K562 (cell line): ENCODE measurements at regions of chr2 and their contacts with region 1.

Region 1: GRCh38 chr2:45643543-45644542 is 7.6 kb upstream of the PRKCE start:
- DNase-seq: peak; percentile 75 to 90 (median 88)
- ATAC-seq: peak; percentile 100
- H3K4me3 ChIP-seq: no peak overlapping the region
- H3K27ac ChIP-seq: no peak overlapping the region
- H3K4me1 ChIP-seq: peaks cover 2 to 8% of the 10 kb centered on the region in 2 experiments; a peak in 4 of 5 replicates
- H3K27me3 ChIP-seq: peaks cover 18 to 52% of the 10 kb centered on the region in 2 experiments
- CTCF ChIP-seq: peak; percentile 86 to 92 (median 89)
- EP300 ChIP-seq: no peak
- POLR2A ChIP-seq: no peak
- RAD21 ChIP-seq: peak; percentile 98

Region 2: DNA sequence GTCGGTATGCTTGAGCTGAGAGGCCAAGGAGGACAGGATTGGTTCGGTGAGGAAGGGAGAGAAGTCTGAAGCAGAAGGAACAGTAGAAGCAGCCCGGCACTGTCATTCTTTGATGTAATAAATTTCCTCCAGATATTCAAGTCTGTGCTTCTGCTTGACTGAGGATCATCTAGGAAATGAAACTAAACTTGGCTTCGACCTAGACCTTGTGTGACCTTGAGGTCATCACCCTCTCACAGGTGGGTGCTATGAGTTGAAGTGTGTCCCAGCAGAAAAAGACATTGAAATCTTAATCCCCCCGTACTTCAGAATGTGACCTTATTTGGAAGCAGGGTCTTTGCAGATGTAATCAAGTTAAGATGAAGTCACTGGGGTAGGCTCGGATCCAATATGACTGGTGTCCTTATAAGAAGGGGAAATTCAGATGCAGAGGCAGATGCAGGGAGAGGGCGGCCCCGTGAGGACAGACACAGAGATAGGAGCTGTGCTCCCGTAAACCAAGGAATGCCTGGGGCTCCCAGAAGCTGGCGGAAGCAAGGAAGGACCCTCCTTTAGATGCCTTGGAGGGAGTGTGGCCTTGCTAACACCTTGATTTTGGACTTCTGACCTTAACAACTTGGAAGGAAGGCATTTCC is 56.7 kb after region 1 on chr2:
- CTCF ChIA-PET with region 1: interaction called, 3 read pairs
- POLR2A ChIA-PET with region 1: no interaction called
- in situ Hi-C with region 1: no loop called
- intact Hi-C with region 1: loop called (anchors 1 kb)
- DNase-seq: peak in 1 of 4 experiments; percentile 19
- ATAC-seq: peak; percentile 51; the same call in 1 of the 3 replicates
- H3K4me3 ChIP-seq: no peak overlapping the region
- H3K27ac ChIP-seq: no peak overlapping the region
- H3K4me1 ChIP-seq: no peaks in the 10 kb centered on the region
- H3K27me3 ChIP-seq: peaks cover 0 to 43% of the 10 kb centered on the region in 2 experiments; a peak in 3 of 5 replicates
- CTCF ChIP-seq: peak in 2 of 3 experiments; percentile 25 to 37; a peak in 2 of 6 replicates
- EP300 ChIP-seq: no peak
- POLR2A ChIP-seq: no peak
- RAD21 ChIP-seq: peak; percentile 57

Region 3: GRCh38 chr2:45778720-45779171 is 134.9 kb after region 1 on chr2:
- CTCF ChIA-PET with region 1: interaction called, 24 read pairs
- POLR2A ChIA-PET with region 1: interaction called, 5 read pairs
- in situ Hi-C with region 1: loop called (anchors 5 kb)
- intact Hi-C with region 1: loop called (anchors 1 kb)
- DNase-seq: peak; percentile 77 to 87 (median 84)
- ATAC-seq: peak; percentile 98
- H3K4me3 ChIP-seq: no peak overlapping the region
- H3K27ac ChIP-seq: no peak overlapping the region
- H3K4me1 ChIP-seq: no peaks in the 10 kb centered on the region; a peak in 1 of 5 replicates
- H3K27me3 ChIP-seq: peaks cover 0 to 10% of the 10 kb centered on the region in 2 experiments; a peak in 3 of 5 replicates
- CTCF ChIP-seq: peak; percentile 75 to 88 (median 78)
- EP300 ChIP-seq: no peak
- POLR2A ChIP-seq: no peak
- RAD21 ChIP-seq: peak; percentile 68 to 74

Region 4: DNA sequence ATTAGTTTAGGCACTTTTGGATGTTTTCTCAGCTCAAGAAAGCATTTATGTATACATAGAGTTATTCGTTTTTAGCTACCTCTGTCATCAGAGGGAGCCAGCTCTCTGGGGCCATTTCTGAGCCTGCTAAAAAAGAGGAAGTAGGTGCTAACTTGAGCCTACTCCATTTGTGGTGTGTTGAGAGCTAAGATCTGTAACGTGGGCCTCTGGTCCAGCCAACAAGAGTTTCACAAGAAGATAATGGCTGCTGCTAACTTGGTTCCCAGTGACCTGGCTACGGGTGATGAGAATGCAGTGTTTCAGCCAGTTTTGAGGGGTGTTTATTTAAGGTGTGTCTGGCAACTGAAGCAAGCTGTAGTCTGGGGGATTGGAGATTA is 190.1 kb after region 1 on chr2:
- CTCF ChIA-PET with region 1: interaction called, 3 read pairs
- POLR2A ChIA-PET with region 1: no interaction called
- in situ Hi-C with region 1: no loop called
- intact Hi-C with region 1: loop called (anchors 10 kb)
- DNase-seq: peak in 1 of 4 experiments; percentile 14
- ATAC-seq: peak; percentile 67; the same call in 2 of the 3 replicates
- H3K4me3 ChIP-seq: no peak overlapping the region
- H3K27ac ChIP-seq: peak overlapping the region; percentile 10; the same call in 1 of the 3 replicates
- H3K4me1 ChIP-seq: peaks cover 0 to 10% of the 10 kb centered on the region in 2 experiments; a peak in 2 of 5 replicates
- H3K27me3 ChIP-seq: peaks cover 4 to 21% of the 10 kb centered on the region in 2 experiments; a peak in 4 of 5 replicates
- CTCF ChIP-seq: 0 out of 6 replicates have a peak, but pooled peaks of 1 of the 3 experiments have one; percentile 6
- EP300 ChIP-seq: no peak
- POLR2A ChIP-seq: no peak
- RAD21 ChIP-seq: no peak

Region 5: DNA sequence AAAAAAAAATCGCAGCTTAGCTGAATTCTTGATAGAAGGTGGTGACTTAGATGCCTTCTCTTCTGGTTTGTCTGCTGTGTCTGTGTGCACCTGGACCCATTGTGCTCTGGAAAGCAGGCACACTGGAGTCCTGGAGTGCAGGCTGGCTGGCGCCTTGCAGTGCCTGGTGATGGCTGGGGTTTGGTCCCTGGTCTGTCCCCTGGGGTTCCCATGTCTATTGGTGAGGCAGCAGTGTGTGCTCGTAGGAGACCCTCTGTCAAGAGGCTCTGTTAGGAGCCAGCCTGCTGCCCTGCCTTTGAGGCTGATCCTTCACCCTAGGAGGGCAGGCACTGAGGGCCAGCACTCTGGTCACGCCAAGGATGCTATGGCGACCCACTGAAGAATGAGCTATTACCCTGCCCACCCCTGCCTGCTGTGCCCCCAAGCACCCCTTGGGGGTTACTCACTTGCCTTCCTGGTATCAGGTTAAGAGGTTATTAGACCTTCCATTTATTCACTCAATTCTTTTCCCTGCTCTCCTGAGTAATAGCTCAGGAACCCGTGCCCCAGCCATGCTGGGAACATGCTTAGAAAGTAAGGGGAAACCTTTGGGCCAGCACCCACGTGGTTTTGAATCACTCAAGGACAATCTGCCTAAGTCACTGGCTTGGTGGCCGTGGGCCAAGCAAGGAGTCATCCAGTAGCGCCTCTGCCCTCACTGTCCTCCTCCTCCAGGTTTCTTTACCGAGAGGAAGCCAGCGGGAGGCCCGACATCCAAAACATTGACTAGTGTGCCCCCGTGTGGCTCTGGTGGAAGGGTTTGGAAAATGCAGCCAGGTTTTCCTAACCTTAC is 292.2 kb after region 1 on chr2:
- CTCF ChIA-PET with region 1: interaction called, 17 read pairs
- POLR2A ChIA-PET with region 1: no interaction called
- in situ Hi-C with region 1: loop called (anchors 5 kb)
- intact Hi-C with region 1: loop called (anchors 1 kb)
- DNase-seq: peak; percentile 77 to 88 (median 80)
- ATAC-seq: peak; percentile 98
- H3K4me3 ChIP-seq: no peak overlapping the region
- H3K27ac ChIP-seq: no peak overlapping the region
- H3K4me1 ChIP-seq: 0 out of 5 replicates have a peak, but pooled peaks cover 4% of the 10 kb centered on the region in 2 experiments
- H3K27me3 ChIP-seq: peaks cover 2 to 33% of the 10 kb centered on the region in 2 experiments; a peak in 4 of 5 replicates
- CTCF ChIP-seq: peak; percentile 78 to 90 (median 81)
- EP300 ChIP-seq: peak; percentile 41; the same call in 1 of the 2 replicates
- POLR2A ChIP-seq: no peak
- RAD21 ChIP-seq: peak; percentile 92 to 96